IMR-90 (cell line): ENCODE measurements at regions of chr21 and their contacts with region 1.

Region 1: DNA sequence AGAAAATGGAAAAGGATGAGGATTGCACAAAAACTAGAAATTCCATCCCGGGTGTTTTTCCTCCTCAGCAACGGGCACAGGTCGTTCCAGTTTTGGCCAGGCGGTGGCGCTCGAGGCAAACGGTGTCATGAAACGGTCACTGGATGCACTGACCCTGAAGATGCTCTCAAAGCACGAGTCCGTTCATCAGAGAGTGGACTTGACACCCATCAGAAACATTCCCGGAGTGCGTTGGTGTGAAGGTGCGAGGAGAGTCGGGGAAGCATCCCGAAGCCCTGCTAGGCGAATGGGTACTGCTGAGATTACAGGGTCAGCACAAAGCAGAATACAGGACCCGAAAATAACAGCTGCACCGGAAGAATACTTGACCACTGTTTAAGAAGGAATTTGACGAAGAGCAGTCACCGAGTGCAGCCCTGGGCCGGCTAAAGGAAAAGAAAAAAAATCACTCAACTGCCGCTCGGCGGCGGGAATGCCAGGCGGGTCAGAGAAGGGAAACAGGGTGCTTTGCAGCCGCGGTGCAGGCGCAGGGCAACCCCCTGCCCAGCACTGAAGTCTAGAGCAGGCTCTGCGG is 71.7 kb upstream of the ETS2 start:
- DNase-seq: peak; percentile 80
- ATAC-seq: peak; percentile 99
- H3K4me3 ChIP-seq: peak overlapping the region; percentile 43
- H3K27ac ChIP-seq: peak overlapping the region; percentile 67
- H3K4me1 ChIP-seq: no peaks in the 10 kb centered on the region
- H3K27me3 ChIP-seq: peaks cover 5% of the 10 kb centered on the region; the same call in 1 of the 2 replicates
- CTCF ChIP-seq: peak; percentile 97
- POLR2A ChIP-seq: no peak
- RAD21 ChIP-seq: peak; percentile 97

Region 2: GRCh38 chr21:38505654-38506515 is 228.2 kb before region 1 on chr21:
- CTCF ChIA-PET with region 1: no interaction called
- POLR2A ChIA-PET with region 1: no interaction called
- dilution Hi-C with region 1: no loop called
- in situ Hi-C with region 1: no loop called
- intact Hi-C with region 1: loop called (anchors 1 kb)
- DNase-seq: peak; percentile 71
- ATAC-seq: peak; percentile 96
- H3K4me3 ChIP-seq: no peak overlapping the region
- H3K27ac ChIP-seq: no peak overlapping the region
- H3K4me1 ChIP-seq: no peaks in the 10 kb centered on the region
- H3K27me3 ChIP-seq: peaks cover 24% of the 10 kb centered on the region
- CTCF ChIP-seq: peak; percentile 79
- POLR2A ChIP-seq: no peak
- RAD21 ChIP-seq: peak; percentile 81

Region 3: DNA sequence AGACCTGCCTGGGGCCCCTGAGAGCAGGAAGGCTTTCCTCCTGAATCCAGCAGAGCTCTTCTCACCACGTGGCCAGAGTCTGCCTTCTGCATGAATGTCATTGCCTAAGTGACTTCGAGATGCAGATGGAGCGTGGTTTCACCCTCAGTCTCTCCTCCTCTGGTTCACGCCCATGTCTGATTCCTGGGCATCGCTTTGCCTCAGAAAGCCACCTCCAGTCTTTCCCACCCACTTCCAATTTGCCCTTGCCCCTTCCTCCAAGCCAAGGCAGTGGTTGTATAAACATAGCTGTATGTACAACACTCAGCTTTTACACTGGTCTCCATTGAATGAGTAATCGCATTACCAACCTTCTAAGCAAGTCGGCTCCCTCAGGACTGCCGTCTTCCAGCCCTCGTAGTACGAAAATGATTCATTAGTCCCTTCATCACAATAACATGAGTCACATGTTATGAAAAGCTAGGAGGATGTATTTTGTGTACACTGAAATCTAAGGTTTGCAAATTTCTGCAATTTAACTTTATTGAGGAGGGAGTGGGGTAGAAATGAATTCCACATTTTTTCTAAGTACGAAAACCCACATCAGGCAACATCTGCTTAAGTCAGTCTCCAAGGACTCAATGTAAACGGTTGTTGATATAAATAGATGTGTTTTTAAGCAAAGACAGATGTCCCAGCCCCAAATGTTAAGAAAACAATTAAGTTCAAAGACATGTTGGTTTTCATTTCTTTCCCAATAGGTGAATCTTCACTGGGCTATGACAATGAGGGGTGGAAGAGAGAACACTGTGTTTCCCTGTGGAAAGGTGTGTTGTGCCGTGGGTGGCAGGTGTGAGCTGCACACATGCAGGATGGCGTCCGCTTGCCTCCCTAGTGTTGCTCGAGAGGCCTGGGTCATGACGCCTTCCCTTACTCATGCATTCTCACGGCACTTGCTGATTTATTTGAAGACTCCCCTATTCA is 39.3 kb after region 1 on chr21:
- CTCF ChIA-PET with region 1: interaction called, 3 read pairs
- POLR2A ChIA-PET with region 1: no interaction called
- dilution Hi-C with region 1: no loop called
- in situ Hi-C with region 1: no loop called
- intact Hi-C with region 1: loop called (anchors 1 kb)
- DNase-seq: peak; percentile 99
- ATAC-seq: peak; percentile 77
- H3K4me3 ChIP-seq: no peak overlapping the region
- H3K27ac ChIP-seq: peak overlapping the region; percentile 92
- H3K4me1 ChIP-seq: peaks cover 28% of the 10 kb centered on the region
- H3K27me3 ChIP-seq: no peaks in the 10 kb centered on the region
- CTCF ChIP-seq: no peak
- POLR2A ChIP-seq: 0 out of 2 replicates have a peak, but pooled peaks have one; percentile 7
- RAD21 ChIP-seq: peak; percentile 11; the same call in 1 of the 2 replicates

Region 4: DNA sequence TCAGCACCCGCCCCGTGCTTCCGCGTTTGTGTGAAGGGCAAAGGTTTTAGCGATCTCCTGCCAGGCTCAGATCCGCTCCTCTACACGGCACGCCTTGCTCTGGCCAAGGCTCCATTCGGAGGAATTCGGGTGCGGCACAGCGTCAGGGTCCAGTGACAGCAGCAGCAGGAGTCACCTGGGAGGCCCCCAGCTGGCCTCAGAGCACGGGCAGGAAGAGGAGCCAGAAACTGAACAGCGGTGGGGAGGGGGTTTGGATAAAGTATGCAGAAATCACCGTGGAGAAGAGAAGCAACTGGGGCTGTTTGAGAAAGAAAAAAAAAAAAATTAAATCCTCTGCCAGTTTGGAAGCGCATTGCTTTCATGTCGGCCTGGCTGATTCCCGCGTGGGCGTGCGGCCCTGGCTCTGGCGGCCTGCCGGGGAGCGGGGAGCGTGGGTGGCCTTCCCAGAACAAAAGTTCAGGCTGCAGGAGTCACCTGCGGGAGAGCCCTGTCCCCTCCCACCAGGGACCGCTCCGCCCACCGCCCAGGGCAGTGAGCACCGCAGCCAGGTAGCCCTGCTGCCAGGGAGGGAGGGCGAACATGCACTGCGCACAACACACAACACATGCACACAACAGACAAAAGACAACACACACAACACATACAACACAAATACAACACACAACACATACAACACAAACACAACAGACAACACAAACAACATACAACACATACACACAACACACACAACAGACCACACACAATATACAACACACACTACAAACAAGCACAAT is 179.2 kb after region 1 on chr21:
- CTCF ChIA-PET with region 1: no interaction called
- POLR2A ChIA-PET with region 1: no interaction called
- dilution Hi-C with region 1: no loop called
- in situ Hi-C with region 1: no loop called
- intact Hi-C with region 1: loop called (anchors 10 kb)
- DNase-seq: peak; percentile 69
- ATAC-seq: peak; percentile 40
- H3K4me3 ChIP-seq: no peak overlapping the region
- H3K27ac ChIP-seq: no peak overlapping the region
- H3K4me1 ChIP-seq: peaks cover 17% of the 10 kb centered on the region
- H3K27me3 ChIP-seq: no peaks in the 10 kb centered on the region
- CTCF ChIP-seq: no peak
- POLR2A ChIP-seq: no peak
- RAD21 ChIP-seq: no peak

Region 5: GRCh38 chr21:38930853-38931252 is 196.8 kb after region 1 on chr21:
- CTCF ChIA-PET with region 1: no interaction called
- POLR2A ChIA-PET with region 1: no interaction called
- dilution Hi-C with region 1: no loop called
- in situ Hi-C with region 1: no loop called
- intact Hi-C with region 1: no loop called
- DNase-seq: peak; percentile 74
- ATAC-seq: peak; percentile 69
- H3K4me3 ChIP-seq: no peak overlapping the region
- H3K27ac ChIP-seq: peak overlapping the region; percentile 67; the same call in 1 of the 2 replicates
- H3K4me1 ChIP-seq: peaks cover 5% of the 10 kb centered on the region
- H3K27me3 ChIP-seq: peaks cover 3% of the 10 kb centered on the region; the same call in 1 of the 2 replicates
- CTCF ChIP-seq: no peak
- POLR2A ChIP-seq: no peak
- RAD21 ChIP-seq: no peak

Region 6: GRCh38 chr21:38985568-38986378 is 251.7 kb after region 1 on chr21:
- CTCF ChIA-PET with region 1: no interaction called
- POLR2A ChIA-PET with region 1: no interaction called
- dilution Hi-C with region 1: no loop called
- in situ Hi-C with region 1: no loop called
- intact Hi-C with region 1: loop called (anchors 2 kb)
- DNase-seq: peak; percentile 93
- ATAC-seq: peak; percentile 73
- H3K4me3 ChIP-seq: no peak overlapping the region
- H3K27ac ChIP-seq: peak overlapping the region; percentile 78
- H3K4me1 ChIP-seq: peaks cover 34% of the 10 kb centered on the region
- H3K27me3 ChIP-seq: no peaks in the 10 kb centered on the region
- CTCF ChIP-seq: no peak
- POLR2A ChIP-seq: no peak
- RAD21 ChIP-seq: no peak

Region 7: DNA sequence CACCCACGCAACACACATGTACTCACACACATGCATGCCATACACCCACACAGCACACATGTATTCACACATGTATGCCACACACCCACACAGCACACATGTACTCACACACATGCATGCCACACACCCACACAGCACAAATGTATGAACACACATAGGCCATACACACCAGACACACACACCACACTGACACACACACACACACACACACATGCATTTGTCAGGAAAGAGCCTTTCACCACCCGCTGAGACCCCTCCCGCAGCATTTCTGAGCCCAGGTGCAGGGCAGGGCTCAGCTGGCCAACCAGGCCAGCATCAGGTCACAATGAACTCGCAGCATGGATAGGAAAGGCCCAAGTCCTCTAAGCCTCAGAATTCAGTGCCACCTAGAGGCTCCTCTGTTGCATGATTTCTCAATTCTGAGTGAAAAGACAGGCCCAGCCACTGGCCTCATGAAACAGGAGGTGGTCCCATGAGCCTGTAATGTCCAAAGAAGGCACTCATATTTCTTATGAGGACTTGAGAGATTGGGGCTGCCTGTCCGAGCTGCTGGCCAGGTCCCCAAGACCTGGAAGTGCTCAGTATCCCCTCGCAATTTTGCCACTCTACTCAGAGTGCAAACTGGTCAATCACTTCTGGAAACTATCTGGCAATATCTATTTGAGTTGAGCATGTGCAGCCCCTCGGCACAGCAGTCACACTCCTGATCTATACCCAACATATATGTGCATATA is 391.9 kb after region 1 on chr21:
- CTCF ChIA-PET with region 1: interaction called, 3 read pairs
- POLR2A ChIA-PET with region 1: no interaction called
- dilution Hi-C with region 1: no loop called
- in situ Hi-C with region 1: loop called (anchors 10 kb)
- intact Hi-C with region 1: loop called (anchors 1 kb)
- DNase-seq: peak; percentile 78
- ATAC-seq: peak; percentile 98
- H3K4me3 ChIP-seq: no peak overlapping the region
- H3K27ac ChIP-seq: peak overlapping the region; percentile 14; the same call in 1 of the 2 replicates
- H3K4me1 ChIP-seq: peaks cover 4% of the 10 kb centered on the region; the same call in 1 of the 2 replicates
- H3K27me3 ChIP-seq: no peaks in the 10 kb centered on the region; the same call in 1 of the 2 replicates
- CTCF ChIP-seq: peak; percentile 78
- POLR2A ChIP-seq: 0 out of 2 replicates have a peak, but pooled peaks have one; percentile 33
- RAD21 ChIP-seq: peak; percentile 91

Region 8: DNA sequence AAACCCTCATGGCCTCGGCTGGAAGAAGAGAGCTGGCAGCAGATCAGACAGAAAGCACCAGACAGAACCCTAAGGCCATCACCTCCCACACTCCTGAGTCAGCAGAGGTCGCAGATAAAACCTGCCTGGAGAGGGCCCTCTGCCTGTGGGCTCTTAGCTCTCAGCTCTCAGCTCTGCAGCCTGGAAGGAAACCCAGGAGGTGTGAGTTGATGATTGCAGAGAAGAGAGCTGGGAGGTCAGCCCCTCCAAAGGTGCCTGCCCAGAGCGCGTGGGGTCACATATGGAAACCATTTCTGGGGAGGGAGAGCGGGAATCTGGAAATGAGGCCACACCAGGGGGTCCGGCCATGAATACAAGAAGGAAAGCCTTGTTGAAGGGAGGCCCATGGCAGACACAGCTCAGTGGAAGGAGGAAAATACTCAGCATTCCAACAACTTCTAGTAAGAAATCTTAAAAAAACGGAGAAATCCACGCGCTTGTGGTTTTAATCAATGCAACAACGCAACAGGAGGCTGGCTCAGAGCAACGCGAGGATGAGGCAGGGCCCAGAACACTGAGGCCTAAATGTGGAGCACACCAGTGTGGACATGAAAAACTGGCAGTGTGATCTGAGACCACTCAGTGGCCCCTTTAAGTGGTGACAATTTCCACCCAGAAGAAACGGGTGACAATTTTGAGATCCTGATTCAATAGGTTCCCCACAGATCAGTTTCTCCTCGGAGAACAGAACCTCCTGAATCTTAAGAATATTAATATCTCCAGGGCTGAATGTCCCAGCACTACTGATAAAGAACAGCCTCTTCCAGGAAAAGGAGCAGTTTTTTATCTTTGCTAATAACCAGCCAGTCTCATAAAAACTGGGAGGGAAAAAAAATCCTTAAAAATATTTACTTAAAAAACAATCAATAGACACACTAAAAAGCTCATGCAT is 403.5 kb after region 1 on chr21:
- CTCF ChIA-PET with region 1: interaction called, 18 read pairs
- POLR2A ChIA-PET with region 1: no interaction called
- dilution Hi-C with region 1: no loop called
- in situ Hi-C with region 1: no loop called
- intact Hi-C with region 1: loop called (anchors 1 kb)
- DNase-seq: peak; percentile 24
- ATAC-seq: no peak
- H3K4me3 ChIP-seq: no peak overlapping the region
- H3K27ac ChIP-seq: no peak overlapping the region
- H3K4me1 ChIP-seq: peaks cover 7% of the 10 kb centered on the region; the same call in 1 of the 2 replicates
- H3K27me3 ChIP-seq: peaks cover 19% of the 10 kb centered on the region
- CTCF ChIP-seq: peak; percentile 16; the same call in 1 of the 2 replicates
- POLR2A ChIP-seq: no peak
- RAD21 ChIP-seq: no peak